ENCODE measurements at regions of chr9 and their contacts with region 1.

Region 1: GRCh38 chr9:123710299-123710698 is 219.6 kb downstream of the DENND1A start:
- DNase-seq: peak; percentile 55
- H3K4me3 ChIP-seq: no peak overlapping the region
- H3K27ac ChIP-seq: no peak overlapping the region
- H3K27me3 ChIP-seq: no peaks in the 10 kb centered on the region
- CTCF ChIP-seq: no peak

Region 2: GRCh38 chr9:123434619-123435528 is 275.4 kb before region 1 on chr9:
- CTCF ChIA-PET with region 1: no interaction called
- POLR2A ChIA-PET with region 1: no interaction called
- DNase-seq: no peak
- H3K4me3 ChIP-seq: no peak overlapping the region
- H3K27ac ChIP-seq: no peak overlapping the region
- H3K27me3 ChIP-seq: no peaks in the 10 kb centered on the region
- CTCF ChIP-seq: peak; percentile 17; the same call in 1 of the 2 replicates

Region 3: GRCh38 chr9:123851851-123852250 is 141.6 kb after region 1 on chr9:
- CTCF ChIA-PET with region 1: no interaction called
- POLR2A ChIA-PET with region 1: no interaction called
- DNase-seq: no peak
- H3K4me3 ChIP-seq: no peak overlapping the region
- H3K27ac ChIP-seq: no peak overlapping the region
- H3K27me3 ChIP-seq: no peaks in the 10 kb centered on the region
- CTCF ChIP-seq: no peak

Region 4: GRCh38 chr9:123893831-123894460 is 183.6 kb after region 1 on chr9:
- CTCF ChIA-PET with region 1: interaction called, 14 read pairs
- POLR2A ChIA-PET with region 1: no interaction called
- DNase-seq: peak; percentile 2
- H3K4me3 ChIP-seq: no peak overlapping the region
- H3K27ac ChIP-seq: no peak overlapping the region
- H3K27me3 ChIP-seq: no peaks in the 10 kb centered on the region
- CTCF ChIP-seq: no peak

Measured in AG04450 (cell line).